Upper lobe of right lung (tissue), 1 donor: ENCODE measurements at regions of chr12 and their contacts with region 1.

Region 1: GRCh38 chr12:53198486-53199110 is 8.5 kb downstream of the ITGB7 start:
- DNase-seq: no peak
- ATAC-seq: no peak
- H3K4me3 ChIP-seq: no peak overlapping the region
- H3K27ac ChIP-seq: no peak overlapping the region
- H3K4me1 ChIP-seq: peaks cover 13% of the 10 kb centered on the region
- H3K27me3 ChIP-seq: no peaks in the 10 kb centered on the region
- CTCF ChIP-seq: no peak

Region 2: GRCh38 chr12:53160000-53160399 is 38.6 kb before region 1 on chr12:
- intact Hi-C with region 1: loop called (anchors 5 kb)
- DNase-seq: no peak
- ATAC-seq: peak; percentile 20
- H3K4me3 ChIP-seq: no peak overlapping the region
- H3K27ac ChIP-seq: no peak overlapping the region
- H3K4me1 ChIP-seq: peaks cover 3% of the 10 kb centered on the region
- H3K27me3 ChIP-seq: no peaks in the 10 kb centered on the region
- CTCF ChIP-seq: no peak

Region 3: DNA sequence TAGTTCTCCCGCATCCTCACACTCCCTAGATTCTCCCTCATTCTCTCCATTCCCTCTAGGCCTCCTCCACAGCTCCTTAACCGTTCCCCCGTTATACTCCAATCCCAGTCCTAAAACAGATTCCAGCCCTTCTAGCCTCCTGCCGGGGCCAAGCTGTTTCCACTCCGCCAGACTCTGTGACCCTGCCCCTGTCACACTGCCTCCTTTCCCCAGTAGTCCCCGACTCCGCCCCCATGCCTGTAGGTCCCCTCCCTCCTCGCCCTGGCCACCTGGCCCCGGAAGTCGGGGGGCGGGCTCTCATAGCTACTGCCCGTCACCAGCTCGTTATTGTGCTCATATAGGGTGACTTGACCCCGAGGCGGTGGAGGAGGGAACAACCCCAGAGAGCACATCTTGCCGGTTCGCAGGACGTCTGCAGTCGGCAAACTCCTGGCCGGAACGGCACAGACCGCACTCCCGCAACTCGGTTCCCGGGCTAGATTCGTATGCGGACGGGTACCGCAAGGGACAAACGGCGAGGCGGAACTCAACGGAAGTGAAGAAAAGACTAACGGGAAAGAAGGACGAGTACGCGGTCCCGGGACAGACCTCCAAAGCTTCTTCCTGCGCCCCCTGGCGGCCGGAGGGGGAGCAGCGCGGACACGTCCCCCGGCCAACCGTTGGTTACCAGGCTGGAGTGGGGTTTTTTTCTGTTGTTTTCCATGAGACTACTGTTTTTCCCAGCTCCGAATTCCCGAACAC is 122.6 kb after region 1 on chr12 and contains the start of gene AAAS:
- intact Hi-C with region 1: no loop called
- DNase-seq: peak; percentile 98
- ATAC-seq: peak; percentile 92
- H3K4me3 ChIP-seq: peak within 1 kb of the TSS; percentile 86
- H3K27ac ChIP-seq: peak within 1 kb of the TSS; percentile 91
- H3K4me1 ChIP-seq: peaks cover 40% of the 10 kb centered on the region
- H3K27me3 ChIP-seq: no peaks in the 10 kb centered on the region
- CTCF ChIP-seq: peak; percentile 99
- total RNA-seq, gene AAAS: 43.2 TPM